ENCODE measurements at regions of chr12 and their contacts with region 1.

Region 1: GRCh38 chr12:6285063-6285477 is 25.4 kb upstream of the PLEKHG6 start:
- DNase-seq: peak; percentile 40
- H3K4me3 Mint-ChIP-seq: no peak overlapping the region
- H3K27ac Mint-ChIP-seq: no peak overlapping the region
- H3K4me1 Mint-ChIP-seq: no peaks in the 10 kb centered on the region
- H3K27me3 Mint-ChIP-seq: peaks cover 24% of the 10 kb centered on the region

Region 2: DNA sequence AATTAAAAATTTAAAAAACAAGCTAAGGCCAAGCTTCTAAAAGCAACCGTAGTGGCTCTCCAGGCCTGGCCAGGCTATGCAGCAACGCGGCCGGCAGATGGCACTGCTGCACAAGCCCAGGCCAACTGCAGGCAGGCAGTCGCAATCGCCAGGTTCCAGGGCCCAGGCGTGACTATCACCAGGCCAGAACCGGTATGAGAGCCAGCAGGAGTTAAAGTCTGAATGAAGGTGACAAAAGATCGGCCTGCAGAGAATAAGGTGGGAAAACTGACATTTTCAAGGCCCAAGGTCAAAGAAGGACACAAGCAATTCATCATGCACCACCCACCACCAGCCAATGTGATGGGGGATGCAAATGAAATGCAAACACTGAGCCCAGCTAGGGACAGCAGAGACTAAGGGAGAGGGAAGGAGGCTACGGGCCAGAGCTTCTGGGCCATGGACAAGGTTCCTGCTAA is 296.4 kb before region 1 on chr12:
- intact Hi-C with region 1: loop called (anchors 1 kb)
- DNase-seq: peak; percentile 53
- H3K4me3 Mint-ChIP-seq: no peak overlapping the region
- H3K27ac Mint-ChIP-seq: no peak overlapping the region
- H3K4me1 Mint-ChIP-seq: no peaks in the 10 kb centered on the region
- H3K27me3 Mint-ChIP-seq: peaks cover 3% of the 10 kb centered on the region

Region 3: DNA sequence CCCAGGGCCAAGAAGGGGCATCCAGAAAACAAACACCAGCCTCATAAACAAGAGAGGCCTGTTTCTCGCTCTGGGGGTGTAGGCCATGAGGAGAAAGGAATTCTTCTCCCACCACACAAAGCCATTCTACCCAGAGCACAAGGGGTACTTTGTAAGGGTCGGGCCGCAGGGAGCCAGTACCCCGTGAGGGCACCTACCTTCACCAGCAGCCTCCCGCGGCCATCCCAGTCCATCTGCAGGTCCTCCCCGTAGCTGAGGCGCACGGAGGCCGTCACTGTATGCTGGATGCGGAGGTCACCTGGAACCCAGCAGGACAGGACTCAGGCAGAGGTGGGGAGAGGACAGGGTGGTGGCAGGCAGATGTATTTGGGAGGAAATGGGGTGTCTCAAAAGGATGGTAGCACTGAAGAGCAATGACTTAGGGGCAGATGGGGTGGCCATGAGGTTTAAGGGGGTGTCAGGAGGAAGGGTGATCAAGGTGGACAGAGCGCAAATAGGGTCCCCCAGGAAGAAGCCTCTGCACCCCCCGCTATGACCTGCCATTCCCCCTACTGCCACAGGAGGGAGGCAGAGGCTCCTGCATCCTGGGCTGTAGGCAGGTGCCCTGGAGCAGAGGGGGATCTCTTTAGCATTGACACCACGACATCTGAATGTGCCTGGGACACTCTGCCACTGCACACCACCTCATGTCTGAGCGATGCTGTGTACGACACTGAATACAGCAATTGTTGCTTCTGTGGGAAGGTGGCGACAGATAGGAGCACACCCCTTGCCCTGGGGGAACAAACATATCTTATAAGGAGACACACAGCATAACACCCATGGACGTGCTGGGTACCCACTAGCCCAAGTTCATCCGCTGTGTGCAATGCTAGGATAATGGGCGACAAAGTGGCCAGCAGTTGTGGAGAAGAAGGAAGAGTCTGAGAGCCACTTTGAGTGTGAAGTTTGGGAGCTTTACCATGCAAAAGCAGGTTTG is 222.0 kb before region 1 on chr12:
- intact Hi-C with region 1: loop called (anchors 1 kb)
- DNase-seq: peak; percentile 30
- H3K4me3 Mint-ChIP-seq: no peak overlapping the region
- H3K27ac Mint-ChIP-seq: no peak overlapping the region
- H3K4me1 Mint-ChIP-seq: peaks cover 4% of the 10 kb centered on the region
- H3K27me3 Mint-ChIP-seq: peaks cover 20% of the 10 kb centered on the region

Measured in activated T-helper 2 cell treated with anti-CD3 and anti-CD28 coated beads, Interferon-gamma antibody, Interleukin-2, Interleukin-4, amounts not matched to agents 10 μg/mL and 5 μg/mL and 100 μg/mL, durations not matched to agents 14 hours and 24 hours and 36 hours (primary cell).